ENCODE measurements at regions of chr2 and their contacts with region 1.

Region 1: DNA sequence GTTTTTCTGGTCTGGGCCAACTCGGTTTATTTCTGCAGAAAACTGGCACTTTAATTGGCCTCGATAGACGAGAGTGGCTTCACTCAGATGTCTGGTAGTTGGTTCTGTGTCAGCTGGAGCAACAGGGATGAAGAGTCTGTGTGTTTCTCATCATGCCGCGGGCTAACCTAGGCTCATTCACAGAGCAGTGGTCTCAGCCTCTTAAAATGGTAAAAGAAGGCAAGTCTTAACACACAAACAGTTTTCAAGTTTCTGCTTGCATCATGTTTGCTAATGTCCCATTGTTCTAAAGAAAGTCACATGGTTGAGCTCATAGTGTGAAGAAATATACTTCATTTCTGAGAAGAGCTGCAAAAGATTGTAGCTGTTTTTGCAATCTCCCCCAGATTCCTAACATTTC is 37.5 kb upstream of the ANXA4 start:
- DNase-seq: no peak
- H3K4me3 ChIP-seq: no peak overlapping the region
- H3K27ac ChIP-seq: no peak overlapping the region
- H3K4me1 ChIP-seq: no peaks in the 10 kb centered on the region
- H3K27me3 ChIP-seq: no peaks in the 10 kb centered on the region
- CTCF ChIP-seq: no peak
- EP300 ChIP-seq: no peak
- POLR2A ChIP-seq: no peak

Region 2: DNA sequence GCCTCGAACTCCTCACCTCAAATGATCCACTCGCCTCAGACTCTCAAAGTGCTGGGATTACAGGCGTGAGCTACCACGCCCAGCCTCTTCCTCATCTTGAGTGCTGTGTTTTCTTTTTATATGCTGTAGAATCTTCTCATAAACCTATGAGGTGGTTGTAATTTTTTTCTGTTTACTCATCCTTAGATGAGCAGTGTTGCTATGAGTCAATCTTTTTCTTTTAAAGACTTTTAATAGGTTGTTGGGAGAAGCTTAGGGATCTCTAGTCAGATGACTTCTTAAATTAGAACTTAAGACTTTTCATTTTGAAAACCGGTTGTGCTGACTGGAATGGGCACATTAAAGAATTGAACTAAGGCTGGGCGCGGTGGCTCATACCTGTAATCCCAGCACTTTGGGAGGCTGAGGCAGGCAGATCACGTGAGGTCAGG is 52.2 kb before region 1 on chr2:
- in situ Hi-C with region 1: loop called in 1 of 4 experiments (anchors 10 kb)
- intact Hi-C with region 1: no loop called
- DNase-seq: no peak
- H3K4me3 ChIP-seq: no peak overlapping the region
- H3K27ac ChIP-seq: no peak overlapping the region
- H3K4me1 ChIP-seq: peaks cover 0 to 7% (median 0%) of the 10 kb centered on the region in 4 donors
- H3K27me3 ChIP-seq: no peaks in the 10 kb centered on the region
- CTCF ChIP-seq: no peak
- EP300 ChIP-seq: no peak
- POLR2A ChIP-seq: no peak